ENCODE measurements at regions of chr1 and their contacts with region 1.

Region 1: DNA sequence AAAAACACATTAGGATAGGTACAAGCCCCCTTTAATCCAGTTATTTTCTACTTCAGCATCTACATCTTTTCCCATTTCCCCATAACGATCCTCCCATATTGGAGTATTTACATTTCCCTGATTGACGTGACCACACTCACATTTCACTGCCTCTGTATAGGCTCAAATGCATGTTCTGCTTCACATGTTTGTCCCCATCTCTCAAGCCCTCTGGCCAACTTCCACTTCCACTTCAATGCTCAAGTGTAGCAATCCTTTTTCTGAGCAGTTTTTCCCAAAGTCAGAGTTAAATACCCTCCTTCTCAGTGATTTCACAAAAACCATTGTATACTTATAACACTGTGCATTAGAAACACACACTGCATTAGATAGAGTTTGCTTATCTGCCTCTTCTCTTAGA is 61.8 kb upstream of the TTLL7 start:
- DNase-seq: no peak
- ATAC-seq: no peak
- H3K4me3 ChIP-seq: no peak overlapping the region
- H3K4me3 Mint-ChIP-seq: no peak overlapping the region
- H3K27ac ChIP-seq: no peak overlapping the region
- H3K27ac Mint-ChIP-seq: no peak overlapping the region
- H3K4me1 ChIP-seq: no peaks in the 10 kb centered on the region
- H3K4me1 Mint-ChIP-seq: no peaks in the 10 kb centered on the region
- H3K27me3 ChIP-seq: peaks cover 0 to 4% of the 10 kb centered on the region in 2 experiments
- H3K27me3 Mint-ChIP-seq: peaks cover 17% of the 10 kb centered on the region
- CTCF ChIP-seq: no peak

Region 2: GRCh38 chr1:83998498-83999315 is 62.1 kb before region 1 on chr1 and contains the start of gene TTLL7:
- CTCF ChIA-PET with region 1: no interaction called
- POLR2A ChIA-PET with region 1: no interaction called
- intact Hi-C with region 1: loop called in 1 of 2 experiments (anchors 5 kb)
- DNase-seq: peak in 8 of 9 experiments; percentile 16 to 69 (median 48)
- ATAC-seq: peak; percentile 67
- H3K4me3 ChIP-seq: peak within 1 kb of the TSS; percentile 48 to 59
- H3K4me3 Mint-ChIP-seq: peak within 1 kb of the TSS; percentile 84
- H3K27ac ChIP-seq: no peak within 1 kb of the TSS
- H3K27ac Mint-ChIP-seq: no peak within 1 kb of the TSS
- H3K4me1 ChIP-seq: peaks cover 6% of the 10 kb centered on the region
- H3K4me1 Mint-ChIP-seq: peaks cover 13% of the 10 kb centered on the region
- H3K27me3 ChIP-seq: peaks cover 11 to 33% of the 10 kb centered on the region in 2 experiments
- H3K27me3 Mint-ChIP-seq: peaks cover 66% of the 10 kb centered on the region
- CTCF ChIP-seq: no peak
- total RNA-seq, gene TTLL7: not detected

Measured in CD8-positive, alpha-beta T cell (primary cell).